Lower leg skin (tissue), 4 donors: ENCODE measurements at regions of chr22 and their contacts with region 1.

Region 1: DNA sequence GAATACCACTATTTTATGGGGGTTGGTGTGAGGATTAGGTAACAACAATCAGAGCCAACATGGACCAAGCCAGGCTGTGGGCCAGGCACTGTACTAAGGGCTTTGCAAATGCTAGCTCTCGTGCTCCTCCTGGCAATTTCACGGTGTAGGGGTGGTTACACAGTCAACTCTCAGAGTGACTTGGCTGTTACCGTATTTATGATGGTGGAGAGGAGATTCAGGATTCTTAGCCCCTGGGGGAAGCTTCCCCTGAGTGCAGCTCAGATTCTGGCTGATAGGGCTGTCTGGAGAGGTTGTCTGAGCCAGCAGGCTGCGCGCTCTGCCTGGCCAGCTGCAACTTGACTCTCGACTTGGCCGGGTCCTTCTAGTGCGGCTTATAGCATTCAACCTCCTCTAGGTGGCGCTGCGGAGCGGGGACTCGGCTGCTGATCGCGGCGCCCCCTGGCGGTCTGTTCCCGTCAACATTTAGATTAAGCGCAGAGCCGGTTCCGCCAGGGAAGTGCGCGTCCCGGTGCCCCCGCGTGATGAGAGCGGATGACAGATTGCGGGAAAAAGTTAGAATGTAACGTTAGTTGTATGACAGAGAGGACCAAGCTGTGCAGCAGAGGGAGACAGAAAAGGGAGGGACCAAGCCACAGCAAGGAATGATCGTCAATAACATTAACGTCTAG is 4.5 kb upstream of the NCF4 start:
- DNase-seq: peak; percentile 83 to 98
- H3K4me3 ChIP-seq: no peak overlapping the region
- CTCF ChIP-seq: peak in 1 of 3 donors; percentile 99
- POLR2A ChIP-seq: no peak

Region 2: DNA sequence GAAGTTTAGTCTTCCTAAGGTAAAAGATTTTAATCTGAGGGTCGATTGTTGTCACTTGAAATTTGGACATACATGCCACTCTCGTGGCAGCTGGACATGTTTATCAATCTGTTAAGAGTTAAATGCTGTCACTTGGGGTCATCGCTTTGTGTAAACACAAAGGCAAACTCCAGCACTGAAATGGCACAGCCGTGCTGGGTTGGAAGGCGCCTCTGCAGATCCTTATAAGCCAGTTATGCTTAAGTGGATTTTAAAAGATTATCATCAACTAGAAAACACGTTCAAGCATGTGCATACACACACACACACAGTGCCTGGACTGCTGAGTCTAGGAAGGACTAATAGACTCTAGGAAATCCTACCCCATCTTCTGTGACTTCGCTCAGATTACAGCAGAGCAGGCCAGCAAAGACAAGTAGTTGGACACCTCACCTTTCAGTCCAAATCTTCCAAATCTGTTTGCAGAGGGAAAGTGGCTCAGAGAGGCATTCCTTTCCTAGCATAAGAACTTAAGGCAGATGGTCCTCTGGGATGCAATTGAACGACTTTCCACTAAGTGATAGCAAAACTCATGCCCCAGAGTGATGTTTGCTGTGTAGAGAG is 236.4 kb before region 1 on chr22:
- intact Hi-C with region 1: no loop called
- DNase-seq: no peak
- H3K4me3 ChIP-seq: no peak overlapping the region
- CTCF ChIP-seq: no peak
- POLR2A ChIP-seq: no peak

Region 3: GRCh38 chr22:36781656-36782627 is 74.3 kb before region 1 on chr22:
- intact Hi-C with region 1: loop called (anchors 5 kb)
- DNase-seq: peak; percentile 65 to 95
- H3K4me3 ChIP-seq: no peak overlapping the region
- CTCF ChIP-seq: peak in 1 of 3 donors; percentile 79
- POLR2A ChIP-seq: no peak

Region 4: DNA sequence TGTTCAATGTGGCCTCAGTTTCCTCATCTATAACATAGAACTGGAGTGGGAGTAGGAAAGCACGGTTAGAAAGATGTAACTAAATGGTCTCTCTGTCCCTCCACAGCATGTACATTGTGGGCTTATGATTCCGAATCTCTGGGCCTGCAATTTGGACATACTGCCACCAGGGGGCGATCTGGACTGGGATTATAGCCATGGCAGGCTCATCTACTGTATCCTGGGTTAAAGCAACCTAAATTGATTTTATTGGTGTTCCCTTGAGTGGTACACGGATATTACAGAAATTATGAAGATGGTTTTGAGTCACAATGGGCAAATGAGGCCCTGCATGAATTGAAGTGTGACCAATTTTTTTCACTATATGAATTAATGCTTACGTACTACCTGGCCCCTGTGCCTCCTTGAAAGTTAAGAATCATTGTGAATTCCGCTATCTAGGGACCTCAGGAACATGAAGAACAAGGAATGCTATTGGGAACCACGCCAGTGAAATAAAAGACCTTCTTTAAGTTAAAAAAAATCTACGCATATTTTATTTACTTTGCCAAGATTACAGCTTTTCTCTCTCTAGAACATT is 130.1 kb after region 1 on chr22:
- intact Hi-C with region 1: loop called (anchors 5 kb)
- DNase-seq: peak in 1 of 2 donors; percentile 63
- H3K4me3 ChIP-seq: no peak overlapping the region
- CTCF ChIP-seq: no peak
- POLR2A ChIP-seq: no peak